Left ventricle myocardium inferior (tissue), 1 donor: ENCODE measurements at regions of chr16 and their contacts with region 1.

Region 1: GRCh38 chr16:68396481-68396880 is 51.8 kb downstream of the SMPD3 start:
- DNase-seq: no peak
- H3K4me3 ChIP-seq: no peak overlapping the region
- H3K27ac ChIP-seq: no peak overlapping the region
- H3K4me1 ChIP-seq: no peaks in the 10 kb centered on the region
- H3K27me3 ChIP-seq: peaks cover 17% of the 10 kb centered on the region
- CTCF ChIP-seq: peak; percentile 66

Region 2: GRCh38 chr16:68345351-68345810 is 51.1 kb before region 1 on chr16:
- intact Hi-C with region 1: no loop called
- DNase-seq: no peak
- H3K4me3 ChIP-seq: no peak overlapping the region
- H3K27ac ChIP-seq: peak overlapping the region; percentile 61
- H3K4me1 ChIP-seq: peaks cover 36% of the 10 kb centered on the region
- H3K27me3 ChIP-seq: no peaks in the 10 kb centered on the region
- CTCF ChIP-seq: no peak

Region 3: DNA sequence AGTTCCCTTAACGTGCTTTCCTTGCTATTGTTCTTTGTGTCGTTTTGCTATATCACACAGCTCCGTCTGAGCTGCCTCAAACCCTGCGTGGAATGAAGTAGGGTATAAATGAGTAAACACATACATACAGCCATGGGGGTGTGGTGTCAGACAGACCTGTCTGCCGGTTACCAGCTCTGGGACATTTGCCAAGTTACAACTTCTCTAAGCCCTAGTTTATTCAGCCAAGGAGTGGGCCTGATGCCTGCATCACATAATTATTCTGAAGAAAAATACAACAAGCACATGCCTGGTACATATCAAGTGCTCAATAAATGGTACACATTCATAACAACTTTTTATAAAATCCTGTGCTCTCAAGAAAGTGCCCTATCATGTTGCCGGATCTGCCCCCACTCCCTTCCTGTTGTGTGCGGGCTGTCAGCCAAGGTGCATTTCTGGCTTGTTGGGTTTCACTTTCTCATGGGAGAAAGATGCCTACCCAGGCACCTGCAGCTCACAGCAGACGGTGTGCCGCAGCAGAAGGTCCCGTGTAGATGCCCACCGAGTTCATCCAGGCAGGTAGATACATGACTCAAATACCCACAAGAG is 21.3 kb after region 1 on chr16:
- intact Hi-C with region 1: no loop called
- DNase-seq: no peak
- H3K4me3 ChIP-seq: no peak overlapping the region
- H3K27ac ChIP-seq: no peak overlapping the region
- H3K4me1 ChIP-seq: no peaks in the 10 kb centered on the region
- H3K27me3 ChIP-seq: no peaks in the 10 kb centered on the region
- CTCF ChIP-seq: no peak

Region 4: DNA sequence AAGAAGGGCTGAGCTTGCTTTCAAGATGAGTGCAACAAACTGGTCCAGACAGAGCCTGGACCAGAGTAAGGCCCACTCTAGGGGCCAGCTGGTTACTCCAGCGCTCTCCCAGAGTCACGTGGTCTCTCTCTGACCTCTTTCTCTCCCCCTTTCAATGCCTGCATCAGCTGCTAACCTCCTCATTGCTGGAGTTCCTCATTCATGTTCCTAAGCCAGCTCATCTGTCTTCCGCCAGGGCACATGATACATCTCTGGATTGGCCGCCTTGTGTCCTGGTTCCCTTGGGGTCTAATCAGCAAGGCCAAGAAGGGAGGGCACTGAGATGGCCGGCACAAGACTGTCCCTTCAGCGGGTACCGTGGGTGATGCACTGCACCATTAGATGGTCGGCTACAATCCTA is 115.7 kb after region 1 on chr16:
- intact Hi-C with region 1: loop called (anchors 5 kb)
- DNase-seq: no peak
- H3K4me3 ChIP-seq: no peak overlapping the region
- H3K27ac ChIP-seq: no peak overlapping the region
- H3K4me1 ChIP-seq: peaks cover 6% of the 10 kb centered on the region
- H3K27me3 ChIP-seq: peaks cover 33% of the 10 kb centered on the region
- CTCF ChIP-seq: no peak

Region 5: GRCh38 chr16:68612996-68613395 is 216.5 kb after region 1 on chr16:
- intact Hi-C with region 1: no loop called
- DNase-seq: no peak
- H3K4me3 ChIP-seq: no peak overlapping the region
- H3K27ac ChIP-seq: no peak overlapping the region
- H3K4me1 ChIP-seq: no peaks in the 10 kb centered on the region
- H3K27me3 ChIP-seq: no peaks in the 10 kb centered on the region
- CTCF ChIP-seq: no peak